ENCODE measurements at regions of chr2 and their contacts with region 1.

Region 1: GRCh38 chr2:134454931-134455330 is 201.1 kb downstream of the MGAT5 start:
- DNase-seq: no peak
- H3K4me3 ChIP-seq: no peak overlapping the region
- H3K27ac ChIP-seq: no peak overlapping the region
- H3K4me1 ChIP-seq: peaks cover 5% of the 10 kb centered on the region
- H3K27me3 ChIP-seq: no peaks in the 10 kb centered on the region
- CTCF ChIP-seq: no peak
- POLR2A ChIP-seq: no peak

Region 2: GRCh38 chr2:133886735-133887660 is 567.9 kb before region 1 on chr2:
- CTCF ChIA-PET with region 1: interaction called, 155 read pairs
- POLR2A ChIA-PET with region 1: no interaction called
- dilution Hi-C with region 1: no loop called
- intact Hi-C with region 1: loop called (anchors 1 kb)
- DNase-seq: peak; percentile 61
- H3K4me3 ChIP-seq: no peak overlapping the region
- H3K27ac ChIP-seq: no peak overlapping the region
- H3K4me1 ChIP-seq: peaks cover 6% of the 10 kb centered on the region
- H3K27me3 ChIP-seq: peaks cover 0 to 26% of the 10 kb centered on the region in 2 experiments
- CTCF ChIP-seq: peak; percentile 60 to 65
- POLR2A ChIP-seq: no peak

Region 3: GRCh38 chr2:134216152-134216829 is 238.6 kb before region 1 on chr2:
- CTCF ChIA-PET with region 1: interaction called, 10 read pairs
- POLR2A ChIA-PET with region 1: no interaction called
- dilution Hi-C with region 1: no loop called
- intact Hi-C with region 1: no loop called
- DNase-seq: no peak
- H3K4me3 ChIP-seq: no peak overlapping the region
- H3K27ac ChIP-seq: no peak overlapping the region
- H3K4me1 ChIP-seq: no peaks in the 10 kb centered on the region
- H3K27me3 ChIP-seq: no peaks in the 10 kb centered on the region
- CTCF ChIP-seq: no peak
- POLR2A ChIP-seq: no peak

Region 4: GRCh38 chr2:134301099-134301927 is 153.6 kb before region 1 on chr2:
- CTCF ChIA-PET with region 1: interaction called, 11 read pairs
- POLR2A ChIA-PET with region 1: no interaction called
- dilution Hi-C with region 1: no loop called
- intact Hi-C with region 1: loop called (anchors 2 kb)
- DNase-seq: peak; percentile 81
- H3K4me3 ChIP-seq: peak overlapping the region in 1 of 3 experiments; percentile 16
- H3K27ac ChIP-seq: peak overlapping the region; percentile 78
- H3K4me1 ChIP-seq: peaks cover 47% of the 10 kb centered on the region
- H3K27me3 ChIP-seq: no peaks in the 10 kb centered on the region
- CTCF ChIP-seq: no peak
- POLR2A ChIP-seq: no peak

Region 5: DNA sequence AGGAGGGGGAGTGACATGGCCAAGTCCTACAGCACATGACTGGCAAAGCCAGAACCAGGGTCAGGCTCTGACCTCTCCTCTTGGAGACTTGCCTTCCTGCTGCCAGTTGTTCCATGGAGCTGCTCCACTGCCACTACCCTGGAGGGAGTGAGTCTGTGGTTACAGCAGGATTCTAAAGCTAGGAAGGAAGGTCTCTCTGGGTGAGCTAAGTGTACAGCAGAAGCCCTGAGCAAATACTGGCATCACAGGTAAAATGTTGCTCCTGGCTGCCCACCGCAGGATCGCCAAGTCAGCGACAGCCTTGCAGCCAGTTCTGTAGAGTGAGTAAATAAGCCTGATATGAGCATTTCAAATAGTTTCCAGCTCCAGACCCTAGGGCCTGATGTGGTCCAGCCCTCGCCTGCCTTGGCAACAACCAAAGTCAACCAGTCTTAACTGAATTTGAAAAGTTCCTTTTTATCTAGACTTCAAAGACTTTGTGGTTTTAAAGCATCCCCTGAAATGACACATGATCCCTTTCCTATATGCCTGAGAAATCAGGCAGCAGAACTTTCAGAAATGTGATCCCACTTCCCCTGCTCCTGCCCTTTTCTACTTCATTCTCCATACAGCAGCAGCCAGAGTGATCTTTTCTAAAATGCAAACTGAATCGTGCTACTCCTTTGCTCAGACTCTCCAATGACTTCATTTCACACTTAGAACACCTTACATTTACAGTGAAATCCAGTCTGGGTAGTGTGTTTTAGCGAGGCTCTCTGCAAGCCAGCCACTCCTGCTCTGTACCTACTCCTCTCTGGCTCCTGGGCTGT is 86.7 kb before region 1 on chr2:
- CTCF ChIA-PET with region 1: interaction called, 234 read pairs
- POLR2A ChIA-PET with region 1: no interaction called
- dilution Hi-C with region 1: no loop called
- intact Hi-C with region 1: no loop called
- DNase-seq: peak; percentile 14
- H3K4me3 ChIP-seq: no peak overlapping the region
- H3K27ac ChIP-seq: no peak overlapping the region
- H3K4me1 ChIP-seq: peaks cover 3% of the 10 kb centered on the region
- H3K27me3 ChIP-seq: no peaks in the 10 kb centered on the region
- CTCF ChIP-seq: no peak
- POLR2A ChIP-seq: no peak

Region 6: DNA sequence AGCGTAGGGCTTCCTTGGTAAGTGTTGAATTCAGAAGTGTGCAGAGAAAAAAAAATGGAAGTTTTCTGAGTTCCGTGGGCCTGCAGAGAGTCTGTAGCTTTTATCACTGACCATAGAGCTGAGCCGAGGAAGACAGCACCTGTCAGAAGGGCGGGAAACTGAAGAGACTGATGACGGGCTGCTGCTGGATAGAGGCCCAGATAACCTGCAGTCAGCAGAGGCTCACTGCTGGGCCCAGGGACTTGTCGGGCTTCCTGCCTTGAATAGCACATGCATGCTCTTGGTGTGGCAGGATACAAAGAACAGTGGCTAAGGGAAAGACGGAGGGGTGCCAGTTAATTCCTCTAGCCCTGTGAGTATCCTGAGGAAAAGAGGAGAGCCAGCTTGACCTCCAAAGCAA is 34.7 kb before region 1 on chr2:
- CTCF ChIA-PET with region 1: interaction called, 94 read pairs
- POLR2A ChIA-PET with region 1: no interaction called
- dilution Hi-C with region 1: no loop called
- intact Hi-C with region 1: no loop called
- DNase-seq: no peak
- H3K4me3 ChIP-seq: no peak overlapping the region
- H3K27ac ChIP-seq: no peak overlapping the region
- H3K4me1 ChIP-seq: peaks cover 12% of the 10 kb centered on the region
- H3K27me3 ChIP-seq: no peaks in the 10 kb centered on the region
- CTCF ChIP-seq: no peak
- POLR2A ChIP-seq: no peak

Region 7: DNA sequence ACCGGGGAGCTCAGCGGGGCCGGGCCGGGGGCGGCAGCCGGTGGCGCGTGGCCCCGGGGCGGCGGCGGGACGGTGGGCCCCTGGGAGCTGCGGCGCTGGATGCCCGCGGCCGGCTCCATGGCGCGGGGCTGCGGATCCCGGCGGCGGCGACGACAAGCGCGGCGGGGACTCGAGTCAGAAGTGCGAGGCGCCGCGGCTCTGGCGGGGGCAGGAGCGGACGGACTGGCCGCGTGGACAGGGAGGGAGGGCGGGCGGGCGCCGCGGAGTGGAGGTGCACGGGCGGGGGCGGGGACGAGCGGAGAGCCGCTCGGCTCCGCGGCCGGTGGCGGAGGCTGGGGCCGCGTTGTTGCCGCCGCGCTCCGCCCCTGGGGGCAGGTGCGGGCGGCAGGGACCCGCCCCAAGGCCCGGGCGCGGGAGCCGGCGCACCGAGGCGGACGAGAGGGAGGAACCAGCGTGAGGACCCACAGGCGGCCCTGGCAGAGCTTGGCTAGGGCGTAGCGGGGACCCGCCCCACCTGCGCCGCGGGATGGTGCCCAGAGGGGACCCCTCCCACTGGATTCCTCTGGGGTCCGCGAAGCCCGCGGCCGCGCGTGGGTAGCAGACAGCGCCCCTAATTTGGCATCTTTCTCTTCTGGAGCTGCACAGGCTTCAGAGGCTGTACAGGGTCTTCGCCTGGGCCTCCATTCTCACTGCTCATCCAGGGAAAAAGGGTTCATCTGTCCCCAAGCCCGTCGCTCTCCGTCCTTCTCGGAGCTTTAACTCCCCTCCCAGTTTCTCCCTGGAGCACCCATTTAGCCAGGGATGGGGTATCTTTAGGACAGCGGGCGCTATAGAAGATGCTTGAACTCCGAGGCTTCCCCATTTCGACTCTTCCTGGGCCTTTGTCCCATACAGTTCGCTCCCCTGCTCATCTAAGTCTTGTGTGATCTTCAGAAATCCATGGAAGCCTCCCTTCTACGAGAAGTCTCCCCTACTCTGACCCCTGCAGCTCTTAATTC is 264.2 kb after region 1 on chr2 and contains the start of gene TMEM163:
- CTCF ChIA-PET with region 1: interaction called, 12 read pairs
- POLR2A ChIA-PET with region 1: no interaction called
- dilution Hi-C with region 1: no loop called
- intact Hi-C with region 1: no loop called
- DNase-seq: no peak
- H3K4me3 ChIP-seq: peak within 1 kb of the TSS in 2 of 3 experiments; percentile 24 to 28
- H3K27ac ChIP-seq: no peak within 1 kb of the TSS
- H3K4me1 ChIP-seq: no peaks in the 10 kb centered on the region
- H3K27me3 ChIP-seq: peaks cover 26 to 68% of the 10 kb centered on the region in 2 experiments
- CTCF ChIP-seq: no peak
- POLR2A ChIP-seq: no peak
- total RNA-seq, gene TMEM163: 1.0 and 1.3 TPM in 2 replicates

Measured in endothelial cell of umbilical vein (primary cell).